Transverse colon (tissue), 4 donors: ENCODE measurements at regions of chr9 and their contacts with region 1.

Region 1: DNA sequence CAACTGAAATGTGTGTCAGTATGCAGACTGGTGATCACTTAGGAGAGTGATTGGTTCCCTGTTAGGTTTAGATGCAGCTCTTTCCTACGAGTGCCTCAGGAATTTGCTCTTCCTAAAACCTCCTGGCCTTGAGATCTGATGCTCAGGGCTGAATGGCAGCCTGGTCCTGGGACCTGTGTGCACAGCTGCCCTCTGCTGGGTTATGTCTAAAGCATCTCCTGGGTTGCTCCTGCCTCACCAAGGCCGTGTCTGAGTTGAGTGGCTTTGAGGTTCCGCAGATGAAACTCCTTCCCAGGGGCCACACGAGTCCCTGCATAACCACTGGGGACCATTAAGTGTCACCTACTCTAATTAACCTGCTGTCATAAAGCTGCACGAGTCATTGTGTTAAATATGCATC is 59.5 kb downstream of the MVB12B start:
- DNase-seq: peak; percentile 56
- H3K4me3 ChIP-seq: no peak overlapping the region
- H3K27ac ChIP-seq: no peak overlapping the region
- H3K4me1 ChIP-seq: peaks cover 0 to 27% (median 9%) of the 10 kb centered on the region in 4 donors
- H3K27me3 ChIP-seq: no peaks in the 10 kb centered on the region
- CTCF ChIP-seq: peak in 4 of 5 experiments; percentile 35 to 61 (median 40)
- EP300 ChIP-seq: no peak
- POLR2A ChIP-seq: no peak

Region 2: DNA sequence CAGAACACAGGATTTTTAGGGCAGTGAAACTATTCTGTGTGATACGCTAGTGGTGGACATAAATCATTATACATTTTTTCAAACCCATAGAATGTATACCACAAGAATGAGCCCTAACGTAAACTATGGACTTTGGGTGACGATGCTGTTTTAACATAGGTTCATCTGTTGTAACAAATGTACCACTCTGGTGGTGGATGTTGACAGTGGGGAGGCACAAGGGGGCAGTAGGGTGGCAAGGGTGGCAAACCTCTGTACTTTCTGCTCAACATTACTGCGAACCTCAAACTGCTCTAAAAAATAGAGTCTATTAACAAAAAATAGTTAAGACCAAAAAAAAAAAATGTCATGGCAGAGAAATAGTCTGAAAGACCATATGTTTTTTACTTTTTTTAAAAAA is 68.6 kb before region 1 on chr9:
- in situ Hi-C with region 1: loop called in 1 of 4 experiments (anchors 10 kb)
- intact Hi-C with region 1: loop called (anchors 2 kb)
- DNase-seq: peak; percentile 51
- H3K4me3 ChIP-seq: no peak overlapping the region
- H3K27ac ChIP-seq: no peak overlapping the region
- H3K4me1 ChIP-seq: no peaks in the 10 kb centered on the region
- H3K27me3 ChIP-seq: no peaks in the 10 kb centered on the region
- CTCF ChIP-seq: peak; percentile 40 to 55 (median 55)
- EP300 ChIP-seq: no peak
- POLR2A ChIP-seq: no peak

Region 3: DNA sequence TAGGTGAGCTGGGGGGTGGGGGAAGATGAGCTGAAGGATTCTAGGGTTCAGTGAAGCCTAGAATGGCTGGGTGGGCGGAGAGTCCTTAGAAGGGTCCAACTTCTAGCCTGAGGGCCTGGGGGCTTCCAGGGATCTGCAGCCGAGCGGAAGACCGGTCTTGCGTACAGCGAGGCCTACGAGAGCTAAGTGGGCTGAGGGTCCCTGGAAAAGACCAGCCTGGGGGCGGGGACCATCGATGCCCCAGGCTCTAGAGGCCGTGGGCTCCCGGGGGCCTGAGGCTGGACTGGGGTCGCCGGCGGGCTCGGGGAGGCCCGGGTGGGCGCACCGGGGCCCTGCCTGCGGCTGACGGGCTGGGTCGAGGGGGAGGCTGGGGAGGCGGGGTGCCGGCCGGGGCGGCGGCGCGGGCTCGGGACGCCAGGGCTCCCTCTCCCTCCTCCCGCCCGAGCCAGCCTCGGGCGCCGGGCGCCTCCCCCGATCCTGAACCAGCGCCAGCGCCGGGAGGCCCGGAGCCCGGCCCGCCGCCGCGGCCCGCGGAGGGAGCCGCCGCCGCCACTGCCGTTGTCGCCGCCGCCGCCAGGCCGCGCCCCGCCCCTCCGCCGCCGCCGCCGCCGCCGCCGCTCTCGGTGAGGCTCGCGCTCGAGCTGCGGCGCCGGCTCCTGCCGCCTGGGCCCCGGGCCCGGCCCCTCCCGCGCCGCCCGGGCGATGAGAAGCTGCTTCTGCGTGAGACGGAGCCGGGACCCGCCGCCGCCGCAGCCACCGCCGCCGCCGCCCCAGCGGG is 59.7 kb before region 1 on chr9 and contains the start of gene MVB12B:
- in situ Hi-C with region 1: loop called in 1 of 4 experiments (anchors 10 kb)
- intact Hi-C with region 1: no loop called
- DNase-seq: peak; percentile 39
- H3K4me3 ChIP-seq: peak within 1 kb of the TSS; percentile 44 to 79 (median 65)
- H3K27ac ChIP-seq: peak within 1 kb of the TSS; percentile 80 to 91 (median 82)
- H3K4me1 ChIP-seq: peaks cover 0 to 28% (median 16%) of the 10 kb centered on the region in 4 donors
- H3K27me3 ChIP-seq: no peaks in the 10 kb centered on the region
- CTCF ChIP-seq: no peak
- EP300 ChIP-seq: no peak
- POLR2A ChIP-seq: no peak
- total RNA-seq, gene MVB12B: 15.7 to 27.3 (median 22.7) TPM

Region 4: GRCh38 chr9:126428534-126429175 is 42.6 kb after region 1 on chr9:
- in situ Hi-C with region 1: no loop called
- intact Hi-C with region 1: no loop called
- DNase-seq: no peak
- H3K4me3 ChIP-seq: no peak overlapping the region
- H3K27ac ChIP-seq: no peak overlapping the region
- H3K4me1 ChIP-seq: no peaks in the 10 kb centered on the region
- H3K27me3 ChIP-seq: no peaks in the 10 kb centered on the region
- CTCF ChIP-seq: no peak
- EP300 ChIP-seq: no peak
- POLR2A ChIP-seq: no peak

Region 5: GRCh38 chr9:126471084-126471624 is 85.1 kb after region 1 on chr9:
- in situ Hi-C with region 1: no loop called
- intact Hi-C with region 1: no loop called
- DNase-seq: peak; percentile 77
- H3K4me3 ChIP-seq: no peak overlapping the region
- H3K27ac ChIP-seq: peak overlapping the region; percentile 44 to 58 (median 53)
- H3K4me1 ChIP-seq: peaks cover 0 to 15% (median 4%) of the 10 kb centered on the region in 4 donors
- H3K27me3 ChIP-seq: no peaks in the 10 kb centered on the region
- CTCF ChIP-seq: no peak
- EP300 ChIP-seq: no peak
- POLR2A ChIP-seq: no peak